IMR-90 (cell line): ENCODE measurements at regions of chr3 and their contacts with region 1.

Region 1: GRCh38 chr3:182909318-182910040 is 70.9 kb downstream of the DCUN1D1 start:
- DNase-seq: no peak
- ATAC-seq: peak; percentile 48; the same call in 1 of the 2 replicates
- H3K4me3 ChIP-seq: no peak overlapping the region
- H3K27ac ChIP-seq: no peak overlapping the region
- H3K4me1 ChIP-seq: peaks cover 14% of the 10 kb centered on the region
- H3K27me3 ChIP-seq: no peaks in the 10 kb centered on the region
- CTCF ChIP-seq: peak; percentile 56
- POLR2A ChIP-seq: no peak
- RAD21 ChIP-seq: peak; percentile 47

Region 2: GRCh38 chr3:183033746-183034145 is 124.3 kb after region 1 on chr3:
- CTCF ChIA-PET with region 1: no interaction called
- POLR2A ChIA-PET with region 1: no interaction called
- dilution Hi-C with region 1: no loop called
- in situ Hi-C with region 1: no loop called
- intact Hi-C with region 1: loop called (anchors 5 kb)
- DNase-seq: peak; percentile 68
- ATAC-seq: peak; percentile 76
- H3K4me3 ChIP-seq: no peak overlapping the region
- H3K27ac ChIP-seq: peak overlapping the region; percentile 62; the same call in 1 of the 2 replicates
- H3K4me1 ChIP-seq: peaks cover 4% of the 10 kb centered on the region; the same call in 1 of the 2 replicates
- H3K27me3 ChIP-seq: no peaks in the 10 kb centered on the region
- CTCF ChIP-seq: no peak
- POLR2A ChIP-seq: no peak
- RAD21 ChIP-seq: no peak